ENCODE measurements at regions of chr6 and their contacts with region 1.

Region 1: GRCh38 chr6:138987640-138988468 is at the start of gene REPS1:
- DNase-seq: peak; percentile 51 to 96
- H3K4me3 ChIP-seq: peak within 1 kb of the TSS; percentile 90 to 98
- H3K27ac ChIP-seq: peak within 1 kb of the TSS; percentile 85 to 91
- H3K4me1 ChIP-seq: peaks cover 0 to 18% of the 10 kb centered on the region in 2 donors
- H3K27me3 ChIP-seq: no peaks in the 10 kb centered on the region
- CTCF ChIP-seq: peak; percentile 92 to 98 (median 98)
- total RNA-seq, gene REPS1: 30.4 TPM

Region 2: GRCh38 chr6:138773177-138774091 is 214.4 kb before region 1 on chr6 and contains the start of gene CCDC28A:
- intact Hi-C with region 1: loop called (anchors 2 kb)
- DNase-seq: peak; percentile 81 to 97
- H3K4me3 ChIP-seq: peak within 1 kb of the TSS; percentile 67 to 92
- H3K27ac ChIP-seq: peak within 1 kb of the TSS; percentile 84 to 96
- H3K4me1 ChIP-seq: peaks cover 0 to 17% of the 10 kb centered on the region in 2 donors
- H3K27me3 ChIP-seq: no peaks in the 10 kb centered on the region
- CTCF ChIP-seq: no peak
- total RNA-seq, gene CCDC28A: 0.32 TPM

Region 3: DNA sequence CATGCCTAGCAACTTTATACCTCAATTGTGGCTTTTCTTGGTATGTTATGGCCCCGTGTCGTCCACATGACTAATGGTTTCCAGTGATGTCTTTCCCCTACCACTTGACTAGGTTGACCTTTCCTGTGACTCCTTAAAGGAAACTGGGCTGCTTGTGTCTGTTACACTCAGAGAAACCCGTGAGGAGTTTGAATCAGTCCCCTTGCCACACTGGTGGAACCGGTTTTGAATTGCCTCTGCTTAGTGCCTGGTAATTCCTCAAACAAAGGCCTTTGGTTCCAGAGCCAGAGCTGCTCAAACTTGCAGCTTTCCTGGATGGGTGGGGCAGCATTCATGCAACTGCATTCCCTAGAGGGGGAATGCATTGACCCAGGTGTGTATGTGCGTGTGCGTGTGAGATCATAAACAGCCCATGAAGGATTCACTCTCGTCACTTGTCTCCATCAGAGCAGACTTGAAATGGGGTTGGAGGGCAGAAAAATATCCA is 170.0 kb before region 1 on chr6:
- intact Hi-C with region 1: loop called (anchors 1 kb)
- DNase-seq: no peak
- H3K4me3 ChIP-seq: no peak overlapping the region
- H3K27ac ChIP-seq: no peak overlapping the region
- H3K4me1 ChIP-seq: no peaks in the 10 kb centered on the region
- H3K27me3 ChIP-seq: no peaks in the 10 kb centered on the region
- CTCF ChIP-seq: no peak

Region 4: DNA sequence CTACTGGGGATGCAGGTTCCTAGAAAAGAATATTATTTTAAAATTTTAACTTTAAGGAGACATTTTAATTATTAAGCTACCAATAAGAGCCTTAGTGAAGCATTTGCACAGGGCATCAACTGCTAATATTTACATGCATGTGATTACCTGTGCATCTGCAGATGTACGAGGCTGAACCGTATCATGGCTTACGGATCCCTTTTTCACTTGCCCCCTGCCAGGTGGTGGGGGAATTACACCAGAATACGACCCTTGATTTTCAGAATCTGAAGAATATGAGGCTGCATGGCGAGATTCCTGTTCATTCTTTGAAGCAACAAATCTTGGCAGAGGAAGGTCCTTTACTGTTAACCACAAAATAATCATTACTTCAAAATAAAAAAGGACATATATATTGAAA is 42.5 kb before region 1 on chr6:
- intact Hi-C with region 1: loop called (anchors 5 kb)
- DNase-seq: no peak
- H3K4me3 ChIP-seq: no peak overlapping the region
- H3K27ac ChIP-seq: no peak overlapping the region
- H3K4me1 ChIP-seq: peaks cover 0 to 4% of the 10 kb centered on the region in 2 donors
- H3K27me3 ChIP-seq: no peaks in the 10 kb centered on the region
- CTCF ChIP-seq: no peak

Region 5: DNA sequence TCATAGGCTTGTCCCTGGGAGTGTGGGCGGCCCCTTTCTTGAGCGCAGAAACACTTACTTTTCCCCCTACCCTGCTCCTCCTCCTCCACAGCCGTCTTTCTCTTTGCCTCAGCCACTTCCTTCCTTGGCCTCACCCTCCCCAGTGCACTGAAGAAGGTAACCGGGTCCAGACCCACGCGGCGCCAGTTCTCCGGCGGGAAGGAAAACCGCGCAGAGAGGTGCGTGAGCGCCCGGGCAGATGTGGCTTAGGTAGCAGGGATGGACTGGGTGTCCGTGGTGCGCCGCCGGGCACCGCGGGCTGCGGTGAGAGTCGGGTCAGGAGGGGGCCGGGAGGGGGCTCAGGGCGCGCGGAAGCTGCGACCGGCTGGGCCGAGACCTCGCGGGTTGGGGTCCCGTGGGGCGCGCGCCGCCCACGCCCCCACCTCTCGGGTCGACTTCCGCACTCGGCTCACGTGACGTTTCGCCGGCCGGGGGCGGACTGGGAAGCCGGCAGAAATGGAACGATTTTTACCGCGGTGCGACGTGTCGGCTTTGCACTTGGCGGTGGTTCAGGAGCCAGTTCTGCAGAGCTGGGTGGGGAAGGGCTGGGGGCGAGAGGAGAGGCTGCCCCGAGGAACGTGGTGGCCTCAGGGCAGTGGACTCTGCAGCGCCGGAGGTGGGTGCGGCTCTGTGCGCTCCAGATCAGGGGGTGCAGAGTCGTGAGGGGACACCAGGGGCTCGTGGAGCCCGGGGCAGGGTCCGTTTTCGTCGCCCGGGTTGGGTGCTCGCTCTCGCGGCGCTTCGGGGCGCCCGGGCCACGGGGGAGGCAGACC is 41.0 kb after region 1 on chr6 and contains the start of gene ABRACL:
- intact Hi-C with region 1: loop called (anchors 1 kb)
- DNase-seq: peak; percentile 19 to 82
- H3K4me3 ChIP-seq: peak within 1 kb of the TSS; percentile 72 to 90
- H3K27ac ChIP-seq: peak within 1 kb of the TSS; percentile 72 to 91
- H3K4me1 ChIP-seq: peaks cover 5 to 7% of the 10 kb centered on the region in 2 donors
- H3K27me3 ChIP-seq: no peaks in the 10 kb centered on the region
- CTCF ChIP-seq: no peak
- total RNA-seq, gene ABRACL: 27.6 TPM

Region 6: DNA sequence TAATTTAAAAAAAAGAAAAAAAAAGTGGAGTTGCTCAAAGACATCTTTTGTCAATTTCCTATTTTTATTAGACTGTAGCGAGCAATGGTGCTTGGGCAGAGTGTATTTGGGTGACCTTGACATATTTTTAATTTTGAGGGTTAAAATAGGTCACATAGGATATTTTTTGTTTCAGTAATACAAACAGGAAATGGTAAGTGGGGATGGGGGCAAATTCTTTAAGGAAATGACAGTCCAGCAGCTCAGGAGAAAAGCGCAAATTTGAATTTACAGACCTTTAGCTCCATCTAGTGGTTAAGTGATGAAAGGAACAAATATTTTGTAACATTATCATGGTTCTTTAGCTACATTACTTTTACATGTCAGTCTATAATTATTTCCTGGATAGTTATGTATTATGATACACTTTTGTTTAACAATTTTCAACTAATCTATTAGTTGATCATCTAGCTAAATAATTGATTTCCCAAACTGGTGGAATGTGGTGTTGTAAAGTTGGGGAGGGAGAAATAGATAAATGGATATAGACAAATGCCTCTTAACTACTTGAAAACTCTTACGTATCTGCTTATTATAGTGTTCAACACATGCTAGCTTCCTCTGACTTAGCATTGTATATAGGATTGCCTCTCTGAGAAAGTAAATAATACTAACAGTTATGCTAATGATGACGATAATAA is 376.6 kb after region 1 on chr6:
- intact Hi-C with region 1: loop called (anchors 10 kb)
- DNase-seq: no peak
- H3K4me3 ChIP-seq: no peak overlapping the region
- H3K27ac ChIP-seq: no peak overlapping the region
- H3K4me1 ChIP-seq: peaks cover 0 to 4% of the 10 kb centered on the region in 2 donors
- H3K27me3 ChIP-seq: no peaks in the 10 kb centered on the region
- CTCF ChIP-seq: peak; percentile 65 to 76 (median 74)

Measured in ascending aorta (tissue), 2 donors.